PC-3 (cell line): ENCODE measurements at regions of chr15 and their contacts with region 1.

Region 1: DNA sequence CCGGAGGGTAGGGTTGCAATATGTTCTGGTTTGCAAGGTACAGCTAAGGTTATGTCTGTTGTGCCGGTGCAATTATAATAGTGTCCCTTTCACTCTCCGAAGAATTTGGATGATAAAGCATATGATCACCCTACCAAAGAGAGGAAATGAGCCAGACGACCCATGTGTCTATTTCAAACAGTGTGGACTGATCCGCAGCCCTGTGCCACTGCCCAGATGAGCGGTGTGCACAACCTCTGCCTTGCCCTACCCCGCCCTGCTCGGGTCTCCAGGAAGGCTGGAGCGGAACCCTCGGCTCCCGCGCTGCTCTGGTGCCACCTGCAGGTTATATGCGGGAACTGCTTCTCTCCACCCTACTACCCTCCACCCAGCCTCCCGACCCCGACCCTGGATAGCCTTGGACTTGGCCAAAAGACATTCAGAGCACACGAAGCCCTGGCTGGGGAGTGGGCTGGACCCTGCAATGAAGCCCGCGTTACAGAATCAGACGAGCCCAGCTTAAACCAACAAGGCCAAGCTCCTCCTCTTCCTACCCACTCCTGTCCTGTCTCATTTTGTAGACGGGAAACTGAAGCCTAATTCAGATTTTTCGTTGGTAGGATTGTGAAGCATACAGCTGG is 68.4 kb upstream of the CHRNB4 start:
- DNase-seq: peak; percentile 74
- ATAC-seq: peak; percentile 99
- H3K4me3 ChIP-seq: peak overlapping the region; percentile 52; the same call in 1 of the 2 replicates
- H3K27ac ChIP-seq: no peak overlapping the region
- H3K4me1 ChIP-seq: no peaks in the 10 kb centered on the region
- H3K27me3 ChIP-seq: peaks cover 8% of the 10 kb centered on the region
- CTCF ChIP-seq: peak; percentile 80

Region 2: DNA sequence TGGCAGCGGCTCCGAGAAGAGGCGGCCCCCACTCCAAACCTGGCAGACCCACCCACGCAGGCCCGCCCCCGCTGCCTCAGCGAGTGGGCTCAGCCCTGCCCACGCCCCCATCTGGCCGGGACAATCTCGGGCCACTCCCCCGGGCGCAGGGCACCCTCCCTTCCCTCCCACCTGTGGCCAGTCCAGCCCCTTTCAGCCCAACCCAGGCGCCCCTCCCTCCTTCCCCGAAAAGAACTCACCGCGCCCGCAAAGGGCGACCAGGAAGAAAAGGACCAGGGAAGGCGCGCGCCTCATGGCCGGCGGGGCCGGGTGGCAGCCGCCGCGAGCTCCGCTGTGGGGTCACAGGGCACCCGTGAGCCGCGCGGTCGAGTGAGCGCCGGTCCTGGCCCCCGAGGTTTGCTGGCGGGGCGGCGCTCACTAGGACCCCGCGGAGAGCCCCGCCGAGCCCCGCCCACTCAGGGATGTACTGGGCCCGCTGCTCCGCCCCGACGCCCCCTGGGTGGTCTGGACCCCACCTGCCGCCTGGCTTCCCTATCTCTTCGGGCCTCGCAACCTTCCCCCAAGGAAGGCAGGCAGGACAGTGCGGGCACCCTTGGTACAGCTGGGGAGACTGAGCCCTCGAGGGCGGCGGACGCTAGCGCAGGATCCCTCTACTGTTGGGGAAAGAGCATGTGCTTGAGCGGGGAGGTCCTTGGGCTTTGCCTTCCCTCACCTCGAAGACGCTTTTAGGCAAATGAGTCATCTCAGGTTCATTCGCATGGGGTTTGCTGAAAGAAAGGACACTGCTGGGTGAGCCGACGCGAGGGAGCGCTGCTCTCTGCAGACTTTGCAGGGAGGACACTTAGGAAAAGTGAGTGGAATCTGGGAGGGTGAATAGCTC is 68.3 kb before region 1 on chr15 and contains the start of gene CHRNB4:
- CTCF ChIA-PET with region 1: no interaction called
- POLR2A ChIA-PET with region 1: no interaction called
- intact Hi-C with region 1: loop called (anchors 5 kb)
- DNase-seq: no peak
- ATAC-seq: peak; percentile 20; the same call in 1 of the 2 replicates
- H3K4me3 ChIP-seq: peak within 1 kb of the TSS; percentile 57
- H3K27ac ChIP-seq: no peak within 1 kb of the TSS
- H3K4me1 ChIP-seq: no peaks in the 10 kb centered on the region
- H3K27me3 ChIP-seq: no peaks in the 10 kb centered on the region
- CTCF ChIP-seq: no peak
- total RNA-seq, gene CHRNB4: not detected in 2 replicates

Region 3: GRCh38 chr15:78840661-78841375 is 131.4 kb after region 1 on chr15:
- CTCF ChIA-PET with region 1: no interaction called
- POLR2A ChIA-PET with region 1: no interaction called
- intact Hi-C with region 1: no loop called
- DNase-seq: no peak
- ATAC-seq: no peak
- H3K4me3 ChIP-seq: no peak overlapping the region
- H3K27ac ChIP-seq: no peak overlapping the region
- H3K4me1 ChIP-seq: no peaks in the 10 kb centered on the region
- H3K27me3 ChIP-seq: no peaks in the 10 kb centered on the region
- CTCF ChIP-seq: no peak

Region 4: GRCh38 chr15:78893538-78893937 is 184.2 kb after region 1 on chr15:
- CTCF ChIA-PET with region 1: no interaction called
- POLR2A ChIA-PET with region 1: no interaction called
- intact Hi-C with region 1: no loop called
- DNase-seq: no peak
- ATAC-seq: no peak
- H3K4me3 ChIP-seq: no peak overlapping the region
- H3K27ac ChIP-seq: no peak overlapping the region
- H3K4me1 ChIP-seq: no peaks in the 10 kb centered on the region
- H3K27me3 ChIP-seq: no peaks in the 10 kb centered on the region
- CTCF ChIP-seq: no peak

Region 5: GRCh38 chr15:78979456-78980320 is 270.3 kb after region 1 on chr15:
- CTCF ChIA-PET with region 1: no interaction called
- POLR2A ChIA-PET with region 1: no interaction called
- intact Hi-C with region 1: no loop called
- DNase-seq: peak; percentile 92
- ATAC-seq: peak; percentile 91
- H3K4me3 ChIP-seq: no peak overlapping the region
- H3K27ac ChIP-seq: peak overlapping the region; percentile 19; the same call in 1 of the 2 replicates
- H3K4me1 ChIP-seq: peaks cover 5% of the 10 kb centered on the region; the same call in 1 of the 2 replicates
- H3K27me3 ChIP-seq: no peaks in the 10 kb centered on the region
- CTCF ChIP-seq: peak; percentile 84